Naive thymus-derived CD4-positive, alpha-beta T cell (primary cell): ENCODE measurements at regions of chr3 and their contacts with region 1.

Region 1: GRCh38 chr3:114454551-114455251 is 160.9 kb downstream of the TIGIT start:
- DNase-seq: peak in 2 of 9 donors; percentile 13 to 15
- ATAC-seq: peak; percentile 14
- H3K4me3 ChIP-seq: no peak overlapping the region
- H3K4me3 Mint-ChIP-seq: no peak overlapping the region
- H3K27ac ChIP-seq: no peak overlapping the region
- H3K27ac Mint-ChIP-seq: no peak overlapping the region
- H3K4me1 ChIP-seq: peaks cover 5 to 11% of the 10 kb centered on the region in 2 donors
- H3K4me1 Mint-ChIP-seq: peaks cover 0 to 22% (median 18%) of the 10 kb centered on the region in 7 donors
- H3K27me3 ChIP-seq: no peaks in the 10 kb centered on the region
- H3K27me3 Mint-ChIP-seq: peaks cover 0 to 10% (median 0%) of the 10 kb centered on the region in 5 donors

Region 2: DNA sequence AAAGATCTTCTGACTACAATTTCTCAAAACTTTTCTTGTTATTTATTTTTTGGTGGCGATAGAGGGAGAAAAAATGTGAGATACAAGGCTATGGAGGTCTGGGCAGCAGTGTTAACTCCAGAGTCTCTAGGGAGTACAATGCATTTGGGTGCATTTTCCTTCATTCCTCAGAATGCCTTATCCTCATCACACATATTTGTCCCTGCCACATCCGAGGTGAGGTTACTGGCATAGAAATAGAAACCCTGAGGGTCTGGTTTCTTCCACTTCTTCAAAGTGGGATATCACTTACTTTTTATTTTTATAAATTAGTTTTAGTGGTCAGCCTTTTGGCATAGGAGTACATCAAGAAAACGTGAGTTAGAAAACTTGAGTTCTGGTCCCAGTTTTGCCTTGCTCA is 10.5 kb before region 1 on chr3:
- CTCF ChIA-PET with region 1: no interaction called
- POLR2A ChIA-PET with region 1: no interaction called
- intact Hi-C with region 1: loop called in 1 of 2 experiments (anchors 1 kb)
- DNase-seq: no peak
- ATAC-seq: no peak
- H3K4me3 ChIP-seq: no peak overlapping the region
- H3K4me3 Mint-ChIP-seq: no peak overlapping the region
- H3K27ac ChIP-seq: no peak overlapping the region
- H3K27ac Mint-ChIP-seq: no peak overlapping the region
- H3K4me1 ChIP-seq: no peaks in the 10 kb centered on the region
- H3K4me1 Mint-ChIP-seq: peaks cover 0 to 12% (median 3%) of the 10 kb centered on the region in 7 donors
- H3K27me3 ChIP-seq: no peaks in the 10 kb centered on the region
- H3K27me3 Mint-ChIP-seq: peaks cover 0 to under 1% (median 0%) of the 10 kb centered on the region in 5 donors